GM12878 (cell line): ENCODE measurements at regions of chr1 and their contacts with region 1.

Region 1: GRCh38 chr1:16067127-16067768 is 6.2 kb downstream of the FAM131C start:
- DNase-seq: no peak
- ATAC-seq: peak; percentile 60
- H3K4me3 ChIP-seq: no peak overlapping the region
- H3K27ac ChIP-seq: no peak overlapping the region
- H3K4me1 ChIP-seq: no peaks in the 10 kb centered on the region
- H3K27me3 ChIP-seq: no peaks in the 10 kb centered on the region; a peak in 2 of 4 replicates
- CTCF ChIP-seq: no peak
- EP300 ChIP-seq: no peak
- POLR2A ChIP-seq: no peak
- RAD21 ChIP-seq: no peak

Region 2: GRCh38 chr1:14869187-14869586 is 1198.1 kb before region 1 on chr1:
- CTCF ChIA-PET with region 1: no interaction called
- POLR2A ChIA-PET with region 1: no interaction called
- RAD21 ChIA-PET with region 1: no interaction called
- SMC1A ChIA-PET with region 1: no interaction called
- in situ Hi-C with region 1: no loop called
- intact Hi-C with region 1: no loop called
- DNase-seq: no peak
- ATAC-seq: no peak
- H3K4me3 ChIP-seq: no peak overlapping the region
- H3K27ac ChIP-seq: no peak overlapping the region
- H3K4me1 ChIP-seq: no peaks in the 10 kb centered on the region
- H3K27me3 ChIP-seq: no peaks in the 10 kb centered on the region; a peak in 1 of 4 replicates
- CTCF ChIP-seq: no peak
- EP300 ChIP-seq: no peak
- POLR2A ChIP-seq: no peak
- RAD21 ChIP-seq: no peak

Region 3: GRCh38 chr1:16038620-16038912 is 28.7 kb before region 1 on chr1:
- CTCF ChIA-PET with region 1: no interaction called
- POLR2A ChIA-PET with region 1: no interaction called
- RAD21 ChIA-PET with region 1: no interaction called
- SMC1A ChIA-PET with region 1: no interaction called
- in situ Hi-C with region 1: no loop called
- intact Hi-C with region 1: loop called (anchors 1 kb)
- DNase-seq: no peak
- ATAC-seq: no peak
- H3K4me3 ChIP-seq: no peak overlapping the region
- H3K27ac ChIP-seq: no peak overlapping the region
- H3K4me1 ChIP-seq: no peaks in the 10 kb centered on the region
- H3K27me3 ChIP-seq: no peaks in the 10 kb centered on the region
- CTCF ChIP-seq: no peak
- EP300 ChIP-seq: no peak
- POLR2A ChIP-seq: no peak
- RAD21 ChIP-seq: no peak

Region 4: DNA sequence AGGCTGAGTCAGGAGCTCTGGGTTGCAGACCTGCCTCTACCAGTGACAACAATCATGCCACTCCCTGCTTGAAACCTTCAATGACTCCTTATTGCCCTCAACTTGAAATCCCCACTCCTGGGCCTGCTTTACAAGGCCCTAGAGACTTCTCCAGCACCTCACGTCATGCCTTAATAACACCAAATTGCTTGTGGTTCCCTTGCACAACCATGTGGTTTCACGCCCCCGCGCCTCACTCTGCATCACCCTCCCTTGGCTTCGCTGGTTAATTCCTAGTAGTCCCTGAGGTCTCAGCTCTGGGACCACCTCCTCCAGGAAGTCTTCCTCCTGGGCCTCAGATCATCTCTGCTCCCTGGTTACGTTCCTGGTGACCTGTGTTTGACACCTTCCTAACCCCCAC is 55.7 kb after region 1 on chr1:
- CTCF ChIA-PET with region 1: no interaction called
- POLR2A ChIA-PET with region 1: no interaction called
- RAD21 ChIA-PET with region 1: no interaction called
- SMC1A ChIA-PET with region 1: no interaction called
- in situ Hi-C with region 1: no loop called
- intact Hi-C with region 1: no loop called
- DNase-seq: peak; percentile 20
- ATAC-seq: peak; percentile 84
- H3K4me3 ChIP-seq: no peak overlapping the region
- H3K27ac ChIP-seq: no peak overlapping the region
- H3K4me1 ChIP-seq: no peaks in the 10 kb centered on the region; the same call in 1 of the 2 replicates
- H3K27me3 ChIP-seq: no peaks in the 10 kb centered on the region; a peak in 1 of 4 replicates
- CTCF ChIP-seq: no peak
- EP300 ChIP-seq: no peak
- POLR2A ChIP-seq: no peak
- RAD21 ChIP-seq: no peak